ENCODE measurements at regions of chr19 and their contacts with region 1.

Region 1: GRCh38 chr19:9584073-9584833 is at the start of gene ZNF121:
- DNase-seq: peak; percentile 77
- ATAC-seq: peak; percentile 83
- H3K4me3 ChIP-seq: peak within 1 kb of the TSS; percentile 72 to 73
- H3K27ac ChIP-seq: peak within 1 kb of the TSS; percentile 79
- H3K4me1 ChIP-seq: peaks cover 3 to 9% of the 10 kb centered on the region in 2 experiments; a peak in 2 of 4 replicates
- H3K27me3 ChIP-seq: no peaks in the 10 kb centered on the region
- CTCF ChIP-seq: no peak
- POLR2A ChIP-seq: peak; percentile 56
- RAD21 ChIP-seq: no peak
- total RNA-seq, gene ZNF121: 80.9 TPM

Region 2: DNA sequence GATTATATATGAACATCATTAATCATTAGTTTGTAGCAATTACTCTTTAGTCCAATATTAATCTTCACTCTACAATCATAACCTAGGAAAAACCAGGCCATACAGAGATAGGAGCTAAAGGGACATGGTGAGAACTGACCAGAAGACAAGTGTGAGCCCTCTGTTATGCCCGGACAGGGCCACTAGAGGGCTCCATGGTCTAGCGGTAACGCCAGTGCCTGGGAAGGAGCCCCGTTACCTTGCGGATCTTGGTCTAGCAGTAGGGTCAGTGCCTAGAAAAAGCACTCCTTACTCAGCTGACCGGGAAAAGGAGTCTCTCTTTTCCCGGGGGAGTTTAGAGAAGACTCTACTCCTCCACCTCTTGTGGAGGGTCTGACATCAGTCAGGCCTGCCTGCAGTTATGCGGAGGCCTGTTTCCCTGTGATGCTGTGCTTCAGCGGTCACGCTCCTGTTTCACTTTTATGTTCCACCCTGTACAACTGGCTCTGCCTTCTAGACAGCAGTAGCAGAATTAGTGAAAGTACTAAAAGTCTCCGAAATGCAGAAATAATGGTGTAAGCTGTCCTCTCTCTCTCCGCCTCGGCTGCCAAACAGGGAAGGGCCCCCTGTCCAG is 378.6 kb before region 1 on chr19:
- CTCF ChIA-PET with region 1: interaction called, 7 read pairs
- POLR2A ChIA-PET with region 1: no interaction called
- RAD21 ChIA-PET with region 1: no interaction called
- intact Hi-C with region 1: loop called (anchors 1 kb)
- DNase-seq: peak; percentile 34
- ATAC-seq: peak; percentile 85
- H3K4me3 ChIP-seq: no peak overlapping the region
- H3K27ac ChIP-seq: no peak overlapping the region
- H3K4me1 ChIP-seq: no peaks in the 10 kb centered on the region
- H3K27me3 ChIP-seq: no peaks in the 10 kb centered on the region
- CTCF ChIP-seq: peak; percentile 47 to 83 (median 76); a peak in 5 of 6 replicates
- POLR2A ChIP-seq: no peak
- RAD21 ChIP-seq: peak; percentile 82

Region 3: DNA sequence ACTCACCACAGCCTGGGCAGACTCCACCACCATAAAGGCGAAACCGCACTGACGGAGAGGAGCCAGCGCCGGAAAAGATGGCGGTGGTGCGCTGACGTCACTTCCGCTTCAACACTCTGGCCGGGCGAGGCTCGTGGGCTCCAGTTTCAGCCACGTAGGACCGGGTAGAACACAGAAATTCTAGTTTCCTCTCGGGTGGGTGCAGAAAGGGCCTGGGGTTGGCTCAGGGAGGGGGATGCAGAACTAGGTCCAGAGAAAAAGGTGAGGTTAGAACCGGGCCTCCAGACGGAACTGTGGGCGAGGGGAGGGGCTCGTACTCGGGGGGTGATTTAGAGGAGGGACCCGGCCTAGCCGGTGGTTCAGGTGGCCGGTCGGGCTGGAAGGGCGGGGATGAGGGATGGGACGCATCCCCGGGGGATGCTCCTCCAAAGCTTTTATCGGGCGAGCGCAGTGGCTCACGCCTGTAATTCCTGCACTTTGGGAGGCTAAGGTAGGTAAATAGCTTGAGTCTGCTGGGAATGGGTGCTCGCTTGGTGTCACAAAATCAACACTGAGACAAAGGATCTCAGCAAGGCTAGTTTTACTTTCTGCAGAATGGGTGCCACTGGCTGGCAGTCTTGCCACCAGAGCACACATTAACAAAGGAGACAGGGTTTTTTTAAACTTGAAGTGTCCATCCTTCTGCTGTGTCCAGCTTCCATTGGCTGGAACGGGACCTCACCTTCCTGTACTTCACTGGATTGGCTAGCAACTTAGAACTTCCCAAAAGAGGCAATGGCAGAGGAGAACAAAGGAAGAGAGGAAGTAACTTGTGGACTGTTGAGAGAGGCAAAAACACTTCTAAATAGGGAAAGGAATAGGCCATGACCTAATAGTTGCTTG is 37.1 kb after region 1 on chr19 and contains the start of gene ZNF561:
- CTCF ChIA-PET with region 1: interaction called, 3 read pairs
- POLR2A ChIA-PET with region 1: interaction called, 4 read pairs
- RAD21 ChIA-PET with region 1: no interaction called
- intact Hi-C with region 1: loop called (anchors 5 kb)
- DNase-seq: peak; percentile 81
- ATAC-seq: peak; percentile 86
- H3K4me3 ChIP-seq: peak within 1 kb of the TSS; percentile 92 to 97
- H3K27ac ChIP-seq: peak within 1 kb of the TSS; percentile 81
- H3K4me1 ChIP-seq: peaks cover 3 to 13% of the 10 kb centered on the region in 2 experiments; a peak in 3 of 4 replicates
- H3K27me3 ChIP-seq: no peaks in the 10 kb centered on the region
- CTCF ChIP-seq: no peak
- POLR2A ChIP-seq: peak; percentile 65
- RAD21 ChIP-seq: no peak; the same call in 1 of the 2 replicates
- total RNA-seq, gene ZNF561: 31.3 TPM

Region 4: DNA sequence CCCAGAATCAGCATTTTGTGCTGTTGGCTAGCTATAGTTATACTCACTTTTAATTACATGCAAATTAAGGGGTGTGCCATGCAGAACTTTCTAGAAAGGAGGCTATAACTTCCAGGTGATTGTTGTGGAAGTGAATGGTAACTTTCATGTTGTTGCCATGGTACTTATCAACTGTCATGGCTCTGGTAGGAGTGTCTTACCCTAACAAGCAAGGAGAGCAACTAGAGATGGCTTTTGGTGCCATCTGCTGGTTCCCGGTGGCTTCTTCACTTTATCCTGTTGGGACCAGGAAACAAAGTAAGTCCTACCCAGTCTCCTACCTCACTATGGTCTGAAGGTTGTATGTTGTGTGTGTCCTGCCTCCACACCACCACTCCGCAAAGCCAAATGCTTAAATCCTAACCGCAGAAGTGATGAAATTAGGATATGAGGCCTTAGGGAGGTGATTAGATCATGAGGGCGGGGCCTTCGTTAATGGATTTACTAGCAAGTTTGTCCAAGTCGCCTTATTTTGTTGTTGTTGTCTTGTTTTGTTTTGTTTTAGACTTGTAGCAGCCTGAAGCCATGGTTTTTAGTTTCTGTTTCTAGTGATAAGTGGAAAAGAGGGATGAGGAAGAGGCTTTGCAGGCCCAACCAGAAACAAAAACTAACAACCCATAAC is 212.0 kb after region 1 on chr19:
- CTCF ChIA-PET with region 1: interaction called, 8 read pairs
- POLR2A ChIA-PET with region 1: no interaction called
- RAD21 ChIA-PET with region 1: no interaction called
- intact Hi-C with region 1: loop called (anchors 1 kb)
- DNase-seq: peak; percentile 90
- ATAC-seq: peak; percentile 100
- H3K4me3 ChIP-seq: no peak overlapping the region
- H3K27ac ChIP-seq: no peak overlapping the region
- H3K4me1 ChIP-seq: no peaks in the 10 kb centered on the region
- H3K27me3 ChIP-seq: no peaks in the 10 kb centered on the region
- CTCF ChIP-seq: peak; percentile 84 to 90 (median 89)
- POLR2A ChIP-seq: no peak
- RAD21 ChIP-seq: peak; percentile 97